ENCODE measurements at regions of chr15 and their contacts with region 1.

Region 1: DNA sequence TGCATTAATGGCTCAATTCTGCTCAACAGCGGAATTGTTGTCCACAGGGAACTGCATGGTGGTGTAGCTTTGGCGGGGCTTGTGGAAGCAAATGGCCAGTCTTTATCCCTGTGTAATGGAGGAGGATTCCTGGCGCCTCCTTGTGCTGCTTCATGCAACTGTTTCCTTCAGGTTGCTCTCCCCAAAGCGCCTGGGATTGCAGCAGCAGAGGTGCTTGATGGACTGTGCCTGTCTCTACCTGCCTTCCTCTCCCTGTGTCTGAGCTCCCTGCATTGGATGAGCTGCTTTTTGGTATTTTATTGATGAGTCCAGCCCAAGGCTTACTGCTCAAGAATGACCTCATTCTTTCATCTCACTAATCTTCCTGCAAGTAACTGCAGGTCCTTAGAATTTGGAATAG is 72.9 kb upstream of the NDN start:
- DNase-seq: no peak
- ATAC-seq: no peak
- H3K4me3 ChIP-seq: no peak overlapping the region
- H3K27ac ChIP-seq: no peak overlapping the region
- H3K4me1 ChIP-seq: no peaks in the 10 kb centered on the region
- H3K27me3 ChIP-seq: no peaks in the 10 kb centered on the region
- CTCF ChIP-seq: no peak
- EP300 ChIP-seq: no peak
- POLR2A ChIP-seq: no peak
- RAD21 ChIP-seq: no peak

Region 2: DNA sequence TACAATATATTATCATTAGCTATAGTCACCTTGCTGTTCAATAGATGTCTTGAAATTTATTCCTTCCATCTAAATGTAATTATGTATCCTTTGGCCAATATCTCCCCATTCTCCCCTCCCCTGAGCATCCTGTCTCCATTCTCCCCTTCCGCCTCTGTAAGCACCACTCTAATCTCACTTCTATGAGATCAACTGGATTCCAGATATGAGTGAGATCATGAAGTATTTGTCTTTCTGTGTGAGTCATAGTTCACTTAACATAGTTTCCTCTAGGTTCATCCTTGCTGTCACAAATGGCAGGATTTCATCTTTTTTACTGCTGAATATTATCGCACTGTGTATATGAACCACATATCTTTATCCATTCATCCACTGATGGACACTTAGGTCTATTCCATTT is 75.9 kb after region 1 on chr15:
- CTCF ChIA-PET with region 1: no interaction called
- POLR2A ChIA-PET with region 1: no interaction called
- in situ Hi-C with region 1: no loop called
- intact Hi-C with region 1: loop called (anchors 10 kb)
- DNase-seq: no peak
- ATAC-seq: no peak
- H3K4me3 ChIP-seq: no peak overlapping the region
- H3K27ac ChIP-seq: no peak overlapping the region
- H3K4me1 ChIP-seq: no peaks in the 10 kb centered on the region
- H3K27me3 ChIP-seq: no peaks in the 10 kb centered on the region
- CTCF ChIP-seq: no peak
- EP300 ChIP-seq: no peak
- POLR2A ChIP-seq: no peak
- RAD21 ChIP-seq: no peak